ENCODE measurements at regions of chr1 and their contacts with region 1.

Region 1: GRCh38 chr1:83931658-83932253 is 67.2 kb downstream of the TTLL7 start:
- DNase-seq: peak in 1 of 2 donors; percentile 23
- ATAC-seq: peak in 7 of 8 donors; percentile 51 to 84 (median 71)
- H3K4me3 ChIP-seq: no peak overlapping the region
- H3K27ac ChIP-seq: no peak overlapping the region
- H3K4me1 ChIP-seq: no peaks in the 10 kb centered on the region
- H3K27me3 ChIP-seq: no peaks in the 10 kb centered on the region
- CTCF ChIP-seq: peak in 8 of 9 donors; percentile 59 to 82 (median 73)

Region 2: GRCh38 chr1:83882906-83883305 is 48.9 kb before region 1 on chr1:
- intact Hi-C with region 1: no loop called
- DNase-seq: peak; percentile 3 to 6
- ATAC-seq: no peak
- H3K4me3 ChIP-seq: no peak overlapping the region
- H3K27ac ChIP-seq: no peak overlapping the region
- H3K4me1 ChIP-seq: no peaks in the 10 kb centered on the region
- H3K27me3 ChIP-seq: no peaks in the 10 kb centered on the region
- CTCF ChIP-seq: peak in 1 of 9 donors; percentile 18

Region 3: GRCh38 chr1:83959824-83960498 is 28.2 kb after region 1 on chr1:
- intact Hi-C with region 1: no loop called
- DNase-seq: no peak
- ATAC-seq: no peak
- H3K4me3 ChIP-seq: no peak overlapping the region
- H3K27ac ChIP-seq: no peak overlapping the region
- H3K4me1 ChIP-seq: peaks cover 0 to 30% (median 7%) of the 10 kb centered on the region in 9 donors
- H3K27me3 ChIP-seq: no peaks in the 10 kb centered on the region
- CTCF ChIP-seq: no peak

Region 4: GRCh38 chr1:84122780-84123382 is 191.1 kb after region 1 on chr1:
- intact Hi-C with region 1: loop called (anchors 1 to 5 kb)
- DNase-seq: peak in 1 of 2 donors; percentile 13
- ATAC-seq: peak in 7 of 8 donors; percentile 42 to 67 (median 51)
- H3K4me3 ChIP-seq: no peak overlapping the region
- H3K27ac ChIP-seq: no peak overlapping the region
- H3K4me1 ChIP-seq: peaks cover 0 to 10% (median 0%) of the 10 kb centered on the region in 9 donors
- H3K27me3 ChIP-seq: no peaks in the 10 kb centered on the region
- CTCF ChIP-seq: peak; percentile 24 to 76 (median 68)

Region 5: DNA sequence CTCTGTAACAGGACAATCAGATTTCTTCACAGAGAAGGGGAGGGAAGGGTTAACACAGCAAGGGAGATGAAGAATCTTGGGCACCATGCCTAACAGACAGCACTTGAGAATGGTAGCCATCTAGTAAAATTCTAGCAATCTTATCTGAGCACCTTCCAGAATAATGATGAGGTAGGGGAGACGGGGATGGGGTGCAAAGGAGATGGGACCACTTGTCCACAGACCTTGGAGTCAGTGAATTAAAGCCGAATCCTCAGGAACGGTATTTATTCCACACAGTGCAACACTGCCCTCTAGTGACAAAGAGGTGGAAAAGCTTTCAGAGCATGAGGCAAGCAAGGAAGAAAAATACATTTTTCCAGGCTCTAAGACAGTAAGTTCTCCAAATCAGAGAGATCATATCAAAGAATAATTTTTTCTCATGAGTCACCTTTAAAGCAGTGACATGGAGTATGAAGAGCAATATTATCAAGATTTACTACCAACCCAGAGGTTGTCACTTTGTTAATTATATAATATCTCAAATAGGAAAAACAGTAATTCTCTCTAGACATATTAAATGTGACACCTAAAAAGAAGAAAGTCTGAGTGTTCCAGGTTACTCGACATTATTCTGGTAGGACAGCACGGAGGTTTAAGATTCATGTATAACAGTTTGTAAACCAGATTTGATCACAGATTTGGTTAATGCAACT is 1004.5 kb after region 1 on chr1:
- intact Hi-C with region 1: loop called in 1 of 10 experiments (anchors 10 kb)
- DNase-seq: peak in 1 of 2 donors; percentile 29
- ATAC-seq: peak in 7 of 8 donors; percentile 68 to 81 (median 72)
- H3K4me3 ChIP-seq: no peak overlapping the region
- H3K27ac ChIP-seq: no peak overlapping the region
- H3K4me1 ChIP-seq: peaks cover 0 to 4% (median 0%) of the 10 kb centered on the region in 9 donors
- H3K27me3 ChIP-seq: peaks cover 0 to 4% (median 0%) of the 10 kb centered on the region in 7 donors
- CTCF ChIP-seq: peak; percentile 75 to 96 (median 91)

Measured in heart right ventricle (tissue), 16 donors.